Aorta (tissue), 5 donors: ENCODE measurements at regions of chr3 and their contacts with region 1.

Region 1: GRCh38 chr3:73549051-73549600 is 75.6 kb downstream of the PDZRN3 start:
- DNase-seq: no peak
- ATAC-seq: no peak
- H3K4me3 ChIP-seq: no peak overlapping the region
- H3K27ac ChIP-seq: no peak overlapping the region
- H3K4me1 ChIP-seq: peaks cover 2 to 5% of the 10 kb centered on the region in 2 donors
- H3K27me3 ChIP-seq: no peaks in the 10 kb centered on the region

Region 2: GRCh38 chr3:73563896-73564582 is 14.9 kb after region 1 on chr3:
- intact Hi-C with region 1: loop called in 1 of 2 experiments (anchors 1 kb)
- DNase-seq: no peak
- ATAC-seq: peak; percentile 67
- H3K4me3 ChIP-seq: no peak overlapping the region
- H3K27ac ChIP-seq: peak overlapping the region; percentile 9 to 93
- H3K4me1 ChIP-seq: peaks cover 4 to 17% of the 10 kb centered on the region in 2 donors
- H3K27me3 ChIP-seq: no peaks in the 10 kb centered on the region